ENCODE measurements at regions of chr2 and their contacts with region 1.

Region 1: GRCh38 chr2:181438261-181438660 is 18.9 kb upstream of the ITGA4 start:
- DNase-seq: peak; percentile 74
- H3K4me3 ChIP-seq: no peak overlapping the region
- H3K27ac ChIP-seq: no peak overlapping the region
- H3K4me1 ChIP-seq: peaks cover 15% of the 10 kb centered on the region
- CTCF ChIP-seq: peak; percentile 84

Region 2: DNA sequence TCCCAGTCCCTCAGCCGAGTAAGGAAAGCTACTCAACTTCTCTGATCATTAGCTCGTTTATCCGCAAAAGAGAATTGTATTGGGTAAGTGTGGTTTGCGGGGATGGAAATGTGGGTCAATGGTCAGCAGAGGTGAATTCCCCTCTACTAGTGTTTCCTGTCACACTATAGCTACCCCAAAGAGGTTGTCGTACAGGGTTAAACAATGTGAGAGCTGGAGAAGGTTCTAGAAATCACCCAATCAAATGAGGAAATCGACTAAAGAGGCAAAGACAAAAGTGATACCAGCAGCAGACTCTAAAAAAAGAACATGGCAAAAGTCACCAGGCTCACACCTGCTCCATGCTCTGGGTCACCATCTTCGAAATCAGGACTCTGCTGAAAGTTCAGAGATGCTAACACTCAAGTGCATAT is 125.7 kb before region 1 on chr2:
- CTCF ChIA-PET with region 1: no interaction called
- POLR2A ChIA-PET with region 1: interaction called, 19 read pairs
- intact Hi-C with region 1: no loop called
- DNase-seq: peak; percentile 81
- H3K4me3 ChIP-seq: peak overlapping the region; percentile 39
- H3K27ac ChIP-seq: peak overlapping the region; percentile 77
- H3K4me1 ChIP-seq: peaks cover 69% of the 10 kb centered on the region
- CTCF ChIP-seq: no peak

Region 3: DNA sequence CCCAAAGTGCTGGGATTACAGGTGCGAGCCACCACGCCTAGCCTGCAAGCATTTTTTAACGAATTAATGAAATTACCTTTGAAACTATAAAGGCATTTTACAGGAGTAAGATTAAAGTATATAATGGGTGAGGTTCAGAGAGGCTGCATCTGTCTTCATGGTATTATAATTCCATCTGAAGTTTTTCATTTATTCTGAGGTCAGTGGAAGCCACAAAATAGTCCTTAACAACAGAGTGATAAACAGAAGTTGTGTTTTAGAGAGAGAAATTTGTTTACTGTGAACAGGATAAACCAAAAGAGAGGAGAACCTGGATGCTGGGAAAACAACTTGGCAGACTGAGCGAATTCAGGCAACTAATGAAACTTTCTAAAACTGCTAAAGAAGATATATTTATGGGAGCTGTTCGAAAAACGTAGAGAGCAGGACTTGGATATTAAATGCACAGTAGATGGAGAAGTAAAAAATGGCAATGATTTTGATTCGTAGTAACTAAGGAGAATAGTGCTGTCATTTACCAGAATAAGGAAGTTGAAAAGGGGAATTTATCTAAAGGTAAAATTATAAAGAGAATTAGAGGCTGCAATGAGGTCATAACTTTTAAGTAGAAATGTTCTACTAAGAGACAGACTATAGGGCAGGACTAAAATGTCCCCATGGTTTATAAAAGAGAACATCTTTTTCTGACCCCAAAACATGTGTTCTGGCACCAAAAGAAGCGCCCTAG is 19.0 kb before region 1 on chr2:
- CTCF ChIA-PET with region 1: no interaction called
- POLR2A ChIA-PET with region 1: no interaction called
- intact Hi-C with region 1: no loop called
- DNase-seq: no peak
- H3K4me3 ChIP-seq: no peak overlapping the region
- H3K27ac ChIP-seq: no peak overlapping the region
- H3K4me1 ChIP-seq: no peaks in the 10 kb centered on the region
- CTCF ChIP-seq: no peak